Activated CD4-positive, alpha-beta T cell treated with anti-CD3 and anti-CD28 coated beads, Interleukin-2, amount 10 ng/mL, durations not matched to agents 24 days and 14 days (primary cell): ENCODE measurements at regions of chr16 and their contacts with region 1.

Region 1: DNA sequence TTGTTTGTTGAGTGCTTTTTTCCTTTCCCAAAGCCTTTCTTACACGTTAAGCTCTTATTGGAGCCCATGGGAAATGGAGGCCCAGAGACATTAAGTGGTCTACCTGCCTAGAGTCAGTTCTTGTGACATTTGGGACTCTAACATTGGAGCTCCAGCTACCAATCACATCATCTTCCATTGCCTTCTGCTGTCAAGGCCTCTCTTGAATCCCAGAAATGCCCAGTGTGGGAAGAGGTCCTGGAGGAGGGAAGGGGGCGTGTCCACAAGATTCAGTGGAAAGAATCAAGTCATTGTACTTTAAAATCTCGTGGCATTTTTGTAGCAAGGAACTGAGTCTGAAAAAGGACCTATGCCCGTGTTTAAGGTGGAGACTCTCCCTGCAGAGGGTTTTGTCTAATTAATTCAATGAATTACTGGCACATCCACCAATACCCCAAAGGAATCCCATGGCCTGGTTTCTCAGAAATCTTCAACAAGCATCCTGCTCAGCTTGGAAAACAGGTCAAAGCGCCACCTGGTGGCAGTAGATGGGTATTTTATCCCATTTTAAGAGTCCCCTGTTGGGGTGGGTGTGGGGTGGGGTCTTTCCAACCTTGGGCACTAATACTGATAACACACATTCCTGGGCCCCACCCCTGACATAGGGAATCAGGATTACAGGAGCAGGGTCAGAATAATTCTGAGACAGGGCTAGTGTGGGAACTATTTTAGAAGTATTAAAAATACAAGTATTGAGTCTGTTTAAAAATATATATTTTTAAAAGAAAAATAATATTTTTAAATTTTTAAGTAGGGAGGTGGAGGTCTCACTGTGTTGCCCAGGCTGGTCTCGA is 24.6 kb downstream of the GPT2 start:
- DNase-seq: peak; percentile 88
- H3K4me3 Mint-ChIP-seq: no peak overlapping the region
- H3K27ac Mint-ChIP-seq: peak overlapping the region; percentile 54
- H3K4me1 Mint-ChIP-seq: peaks cover 11% of the 10 kb centered on the region
- H3K27me3 Mint-ChIP-seq: no peaks in the 10 kb centered on the region

Region 2: DNA sequence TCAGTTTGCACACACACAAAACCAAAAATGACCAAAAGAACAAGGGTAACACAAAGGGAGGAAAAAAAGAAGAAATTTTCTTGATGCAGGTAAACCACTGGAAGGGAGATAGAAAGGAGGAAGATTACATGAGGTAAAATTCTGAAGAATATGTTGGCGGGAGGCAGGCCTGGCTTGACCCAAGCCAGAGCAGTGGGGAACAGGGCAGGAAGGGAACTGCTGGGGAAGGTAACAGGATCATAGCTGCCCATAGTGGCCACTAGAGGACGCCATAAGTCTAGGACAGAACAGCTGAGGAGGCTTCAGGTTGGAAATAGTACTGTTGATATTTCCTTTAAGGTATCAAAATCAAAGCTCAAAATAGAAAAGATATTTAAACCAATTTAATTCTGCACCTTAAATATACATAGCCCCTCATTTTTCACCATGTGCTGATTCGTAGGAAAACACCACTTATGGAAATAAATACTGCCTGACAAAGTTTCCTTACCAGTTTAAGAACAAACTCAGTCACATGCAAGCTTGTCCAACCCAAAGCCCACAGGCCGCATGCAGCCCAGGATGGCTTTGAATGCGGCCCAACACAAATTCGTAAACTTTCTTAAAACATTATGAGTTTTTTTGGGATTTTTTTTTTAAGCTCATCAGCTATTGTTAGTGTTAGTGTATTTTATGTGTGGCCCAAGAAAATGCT is 235.3 kb before region 1 on chr16:
- intact Hi-C with region 1: loop called (anchors 1 kb)
- DNase-seq: peak; percentile 84
- H3K4me3 Mint-ChIP-seq: no peak overlapping the region
- H3K27ac Mint-ChIP-seq: no peak overlapping the region
- H3K4me1 Mint-ChIP-seq: peaks cover 3% of the 10 kb centered on the region
- H3K27me3 Mint-ChIP-seq: no peaks in the 10 kb centered on the region

Region 3: GRCh38 chr16:46830902-46831647 is 77.7 kb before region 1 on chr16 and contains the start of gene C16orf87:
- intact Hi-C with region 1: no loop called
- DNase-seq: peak; percentile 98
- H3K4me3 Mint-ChIP-seq: peak within 1 kb of the TSS; percentile 95
- H3K27ac Mint-ChIP-seq: peak within 1 kb of the TSS; percentile 99
- H3K4me1 Mint-ChIP-seq: peaks cover 30% of the 10 kb centered on the region
- H3K27me3 Mint-ChIP-seq: peaks cover 17% of the 10 kb centered on the region
- total RNA-seq, gene C16orf87: 32.0 and 32.7 TPM in 2 replicates

Region 4: GRCh38 chr16:46853713-46854443 is 54.9 kb before region 1 on chr16:
- intact Hi-C with region 1: loop called (anchors 1 kb)
- DNase-seq: peak; percentile 90
- H3K4me3 Mint-ChIP-seq: no peak overlapping the region
- H3K27ac Mint-ChIP-seq: no peak overlapping the region
- H3K4me1 Mint-ChIP-seq: peaks cover 2% of the 10 kb centered on the region
- H3K27me3 Mint-ChIP-seq: peaks cover 3% of the 10 kb centered on the region

Region 5: DNA sequence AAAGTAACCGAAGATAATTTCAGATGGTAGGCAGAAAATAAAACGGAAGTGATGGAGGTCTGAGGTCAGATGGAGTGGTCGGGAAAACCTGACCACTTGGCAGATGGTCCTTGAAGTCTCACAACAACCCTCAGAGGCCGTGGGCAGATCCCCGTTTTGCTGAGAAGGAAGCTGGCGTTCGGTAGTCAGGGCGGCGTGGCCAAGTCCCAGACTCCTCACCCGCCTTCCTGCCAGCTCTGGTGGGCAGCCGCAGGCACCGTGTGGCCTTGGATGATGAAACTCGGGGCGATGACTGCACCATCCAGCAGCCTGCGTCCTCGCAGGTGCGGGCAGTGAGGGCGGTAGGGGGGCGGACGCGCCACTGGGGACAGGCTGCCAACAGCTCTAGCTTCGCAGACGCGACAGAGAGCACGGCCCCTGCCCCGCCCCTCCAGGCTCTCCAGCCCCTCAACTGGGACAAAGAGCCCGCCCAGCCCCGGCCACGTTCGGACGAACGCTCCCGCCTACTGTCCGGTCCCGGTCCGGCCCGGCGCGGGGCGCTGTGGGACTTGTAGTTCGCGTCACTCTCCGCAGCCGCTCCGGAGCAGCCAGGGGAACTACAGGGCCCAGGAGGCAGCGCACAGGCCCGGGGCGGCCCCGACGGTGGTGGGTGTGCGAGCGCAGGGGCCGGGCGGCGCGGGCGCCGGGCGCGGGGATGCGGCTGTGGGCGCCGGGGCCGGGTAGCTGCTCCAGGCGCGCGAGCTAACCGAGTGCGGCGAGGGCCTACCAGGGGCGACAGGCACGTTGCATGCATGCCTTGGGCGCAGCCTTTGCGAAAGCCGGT is 24.9 kb before region 1 on chr16 and contains the start of gene GPT2:
- intact Hi-C with region 1: loop called (anchors 2 kb)
- DNase-seq: peak; percentile 96
- H3K4me3 Mint-ChIP-seq: peak within 1 kb of the TSS; percentile 85
- H3K27ac Mint-ChIP-seq: peak within 1 kb of the TSS; percentile 90
- H3K4me1 Mint-ChIP-seq: peaks cover 14% of the 10 kb centered on the region
- H3K27me3 Mint-ChIP-seq: peaks cover 31% of the 10 kb centered on the region
- total RNA-seq, gene GPT2: 15.7 and 16.0 TPM in 2 replicates

Region 6: DNA sequence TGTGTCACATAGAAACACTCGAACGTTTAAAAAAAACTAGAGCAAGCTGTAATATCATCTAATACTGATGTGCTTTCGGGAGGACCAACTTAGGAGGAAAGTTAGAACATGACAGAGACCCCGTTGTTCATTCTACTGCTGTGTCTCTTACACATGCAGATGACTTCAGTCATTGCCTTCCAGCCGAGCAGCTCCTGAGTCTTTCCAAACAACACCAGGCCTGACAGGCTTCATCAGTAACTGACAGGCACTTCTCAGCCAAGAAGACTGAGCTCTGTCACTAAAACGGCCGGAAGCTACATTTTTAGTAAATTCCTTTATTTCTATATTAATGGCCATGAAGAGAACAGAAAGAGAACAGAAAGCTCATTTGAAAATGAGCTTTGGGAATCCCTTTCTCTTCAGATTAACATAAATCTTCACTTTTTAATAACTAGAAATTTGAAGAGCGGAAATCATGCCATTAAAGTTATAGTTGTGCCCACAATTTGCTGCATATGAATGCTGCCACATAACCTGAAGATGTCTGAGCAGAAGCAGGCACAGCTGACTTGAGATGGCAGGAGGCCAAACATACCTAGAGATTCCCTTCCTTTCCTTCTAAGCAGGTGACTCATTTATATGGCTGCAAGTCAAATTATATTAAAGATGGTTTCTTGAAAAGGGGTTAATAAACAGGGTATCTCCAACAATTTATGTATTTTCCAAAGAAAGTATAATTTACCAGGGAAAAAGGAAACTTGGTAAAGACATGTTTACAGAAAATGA is 403.2 kb after region 1 on chr16:
- intact Hi-C with region 1: no loop called
- DNase-seq: no peak
- H3K4me3 Mint-ChIP-seq: no peak overlapping the region
- H3K27ac Mint-ChIP-seq: no peak overlapping the region
- H3K4me1 Mint-ChIP-seq: no peaks in the 10 kb centered on the region
- H3K27me3 Mint-ChIP-seq: no peaks in the 10 kb centered on the region